ENCODE measurements at regions of chr19 and their contacts with region 1.

Region 1: GRCh38 chr19:3984908-3985642 is at the start of gene EEF2:
- DNase-seq: peak; percentile 86 to 95 (median 91)
- H3K4me3 ChIP-seq: peak within 1 kb of the TSS; percentile 90
- H3K4me3 Mint-ChIP-seq: peak within 1 kb of the TSS; percentile 94 to 99 (median 97)
- H3K27ac ChIP-seq: peak within 1 kb of the TSS; percentile 86
- H3K27ac Mint-ChIP-seq: peak within 1 kb of the TSS; percentile 92 to 98 (median 97)
- H3K4me1 ChIP-seq: peaks cover 46% of the 10 kb centered on the region
- H3K4me1 Mint-ChIP-seq: peaks cover 49 to 62% (median 57%) of the 10 kb centered on the region in 3 donors
- H3K27me3 ChIP-seq: no peaks in the 10 kb centered on the region
- H3K27me3 Mint-ChIP-seq: peaks cover 0 to 10% of the 10 kb centered on the region in 2 donors
- total RNA-seq, gene EEF2: 3,106 to 3,129 TPM

Region 2: GRCh38 chr19:2610637-2611482 is 1374.2 kb before region 1 on chr19:
- CTCF ChIA-PET with region 1: no interaction called
- POLR2A ChIA-PET with region 1: interaction called, 12 read pairs
- DNase-seq: peak; percentile 76 to 89 (median 87)
- H3K4me3 ChIP-seq: peak overlapping the region; percentile 67
- H3K4me3 Mint-ChIP-seq: peak overlapping the region; percentile 45 to 89 (median 83)
- H3K27ac ChIP-seq: no peak overlapping the region
- H3K27ac Mint-ChIP-seq: peak overlapping the region in 7 of 8 donors; percentile 29 to 95 (median 85)
- H3K4me1 ChIP-seq: peaks cover 28% of the 10 kb centered on the region
- H3K4me1 Mint-ChIP-seq: peaks cover 32 to 47% (median 39%) of the 10 kb centered on the region in 3 donors
- H3K27me3 ChIP-seq: no peaks in the 10 kb centered on the region
- H3K27me3 Mint-ChIP-seq: peaks cover 0 to 5% of the 10 kb centered on the region in 2 donors

Region 3: DNA sequence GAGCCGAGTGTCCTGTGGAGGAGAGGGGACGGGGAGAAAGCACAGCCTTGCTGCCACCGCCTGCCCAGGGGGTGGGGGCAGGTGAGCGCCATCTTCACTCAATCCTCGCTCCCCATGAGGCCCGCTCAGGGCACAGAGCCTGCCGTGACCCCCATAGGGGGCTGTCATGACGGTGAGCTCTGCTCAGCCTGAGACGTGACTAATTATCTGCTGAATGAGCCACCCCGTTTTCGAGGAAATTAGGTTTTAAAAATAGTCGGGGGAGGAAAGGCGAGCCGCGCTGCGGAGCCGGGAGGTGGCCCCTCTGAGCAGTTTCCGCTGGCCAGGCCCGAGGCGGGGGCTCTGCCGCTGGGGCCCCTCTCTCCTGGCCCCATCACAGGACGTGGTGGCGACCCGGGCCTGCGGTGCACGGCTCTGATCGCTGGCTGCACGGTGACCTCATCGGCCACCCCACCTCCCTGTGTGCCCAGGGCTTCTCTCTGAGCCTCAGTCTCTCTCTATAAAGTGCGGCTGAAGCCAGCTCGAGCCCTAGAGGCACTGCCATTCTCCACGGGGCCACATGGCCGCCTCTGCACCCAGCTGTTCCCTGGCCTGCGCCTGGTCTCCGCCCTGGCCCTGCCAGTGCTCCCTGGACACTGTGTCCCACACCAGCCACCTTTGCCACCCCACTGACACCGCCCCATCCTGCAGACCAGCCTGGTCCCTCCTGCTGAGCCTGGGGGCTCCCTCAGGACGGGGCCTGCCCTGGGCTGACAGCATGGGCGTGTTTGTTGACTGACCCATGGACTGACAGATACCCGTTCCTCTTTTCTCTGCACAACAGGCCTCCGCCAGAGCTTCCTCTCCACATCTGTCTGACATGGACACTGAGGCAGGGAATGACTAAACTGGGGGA is 313.1 kb before region 1 on chr19:
- CTCF ChIA-PET with region 1: no interaction called
- POLR2A ChIA-PET with region 1: interaction called, 12 read pairs
- DNase-seq: no peak
- H3K4me3 ChIP-seq: no peak overlapping the region
- H3K4me3 Mint-ChIP-seq: peak overlapping the region in 5 of 7 donors; percentile 19 to 59 (median 47)
- H3K27ac ChIP-seq: peak overlapping the region; percentile 86
- H3K27ac Mint-ChIP-seq: peak overlapping the region in 5 of 8 donors; percentile 9 to 81 (median 66)
- H3K4me1 ChIP-seq: peaks cover 22% of the 10 kb centered on the region
- H3K4me1 Mint-ChIP-seq: peaks cover 14 to 54% (median 16%) of the 10 kb centered on the region in 3 donors
- H3K27me3 ChIP-seq: no peaks in the 10 kb centered on the region
- H3K27me3 Mint-ChIP-seq: no peaks in the 10 kb centered on the region

Region 4: GRCh38 chr19:4007021-4007835 is 22.2 kb after region 1 on chr19 and contains the start of gene PIAS4:
- CTCF ChIA-PET with region 1: interaction called, 26 read pairs
- POLR2A ChIA-PET with region 1: interaction called, 16 read pairs
- DNase-seq: peak; percentile 91 to 97 (median 94)
- H3K4me3 ChIP-seq: peak within 1 kb of the TSS; percentile 86
- H3K4me3 Mint-ChIP-seq: peak within 1 kb of the TSS; percentile 85 to 91 (median 87)
- H3K27ac ChIP-seq: peak within 1 kb of the TSS; percentile 67
- H3K27ac Mint-ChIP-seq: peak within 1 kb of the TSS; percentile 67 to 89 (median 81)
- H3K4me1 ChIP-seq: peaks cover 28% of the 10 kb centered on the region
- H3K4me1 Mint-ChIP-seq: peaks cover 17 to 33% (median 22%) of the 10 kb centered on the region in 3 donors
- H3K27me3 ChIP-seq: no peaks in the 10 kb centered on the region
- H3K27me3 Mint-ChIP-seq: no peaks in the 10 kb centered on the region
- total RNA-seq, gene PIAS4: 29.1 to 33.8 TPM

Region 5: GRCh38 chr19:4089400-4089908 is 104.4 kb after region 1 on chr19:
- CTCF ChIA-PET with region 1: interaction called, 3 read pairs
- POLR2A ChIA-PET with region 1: interaction called, 16 read pairs
- DNase-seq: peak; percentile 37 to 74 (median 52)
- H3K4me3 ChIP-seq: peak overlapping the region; percentile 49
- H3K4me3 Mint-ChIP-seq: peak overlapping the region; percentile 59 to 78 (median 72)
- H3K27ac ChIP-seq: peak overlapping the region; percentile 62
- H3K27ac Mint-ChIP-seq: peak overlapping the region; percentile 81 to 96 (median 94)
- H3K4me1 ChIP-seq: peaks cover 48% of the 10 kb centered on the region
- H3K4me1 Mint-ChIP-seq: peaks cover 35 to 52% (median 48%) of the 10 kb centered on the region in 3 donors
- H3K27me3 ChIP-seq: no peaks in the 10 kb centered on the region
- H3K27me3 Mint-ChIP-seq: no peaks in the 10 kb centered on the region

Region 6: DNA sequence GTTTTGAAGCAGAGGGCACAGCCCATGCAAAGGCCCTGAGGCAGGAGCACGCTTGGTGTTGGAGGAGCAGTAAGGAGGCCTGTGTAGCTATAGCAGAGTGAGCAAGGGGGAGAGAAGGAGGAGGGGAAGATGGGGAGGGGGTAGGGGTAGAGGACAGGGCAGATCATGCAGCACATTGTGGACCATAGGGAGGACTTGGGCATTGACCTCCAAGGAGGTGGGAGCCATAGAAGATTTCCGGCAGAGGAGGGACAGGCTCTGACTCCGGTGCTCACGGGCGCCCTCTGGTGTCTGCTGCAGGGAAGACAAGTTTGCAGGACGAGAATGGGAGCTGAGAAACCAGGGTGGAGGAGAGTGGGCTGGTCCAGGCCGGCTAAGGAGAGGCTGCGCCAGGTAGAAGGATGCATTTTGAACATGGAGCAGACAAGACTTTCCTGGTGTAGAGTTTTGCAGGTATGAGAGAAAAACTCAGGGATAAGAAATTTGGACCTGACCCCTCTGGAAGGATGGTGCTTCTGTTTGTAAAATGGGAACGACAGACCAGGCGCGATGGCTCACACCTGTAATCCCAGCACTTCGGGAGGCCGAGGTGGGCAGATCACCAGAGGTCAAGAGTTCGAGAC is 154.7 kb after region 1 on chr19:
- CTCF ChIA-PET with region 1: interaction called, 46 read pairs
- POLR2A ChIA-PET with region 1: interaction called, 7 read pairs
- DNase-seq: peak; percentile 71 to 87 (median 82)
- H3K4me3 ChIP-seq: no peak overlapping the region
- H3K4me3 Mint-ChIP-seq: peak overlapping the region in 6 of 7 donors; percentile 19 to 67 (median 34)
- H3K27ac ChIP-seq: no peak overlapping the region
- H3K27ac Mint-ChIP-seq: peak overlapping the region in 6 of 8 donors; percentile 1 to 92 (median 71)
- H3K4me1 ChIP-seq: peaks cover 9% of the 10 kb centered on the region
- H3K4me1 Mint-ChIP-seq: peaks cover 8 to 12% (median 11%) of the 10 kb centered on the region in 3 donors
- H3K27me3 ChIP-seq: no peaks in the 10 kb centered on the region
- H3K27me3 Mint-ChIP-seq: peaks cover 7 to 15% of the 10 kb centered on the region in 2 donors

Measured in CD8-positive, alpha-beta memory T cell (primary cell).